Naive thymus-derived CD4-positive, alpha-beta T cell (primary cell): ENCODE measurements at regions of chr1 and their contacts with region 1.

Region 1: GRCh38 chr1:182839209-182840065 is at the start of gene DHX9:
- DNase-seq: peak; percentile 93 to 100 (median 97)
- ATAC-seq: peak; percentile 89
- H3K4me3 ChIP-seq: peak within 1 kb of the TSS; percentile 99
- H3K4me3 Mint-ChIP-seq: peak within 1 kb of the TSS; percentile 91 to 100 (median 98)
- H3K27ac ChIP-seq: peak within 1 kb of the TSS; percentile 84
- H3K27ac Mint-ChIP-seq: peak within 1 kb of the TSS; percentile 92 to 100 (median 98)
- H3K4me1 ChIP-seq: peaks cover 22 to 33% of the 10 kb centered on the region in 2 donors
- H3K4me1 Mint-ChIP-seq: peaks cover 36 to 61% (median 54%) of the 10 kb centered on the region in 7 donors
- H3K27me3 ChIP-seq: no peaks in the 10 kb centered on the region
- H3K27me3 Mint-ChIP-seq: peaks cover 0 to 9% (median 0%) of the 10 kb centered on the region in 5 donors
- total RNA-seq, gene DHX9: 207 to 299 (median 227) TPM

Region 2: DNA sequence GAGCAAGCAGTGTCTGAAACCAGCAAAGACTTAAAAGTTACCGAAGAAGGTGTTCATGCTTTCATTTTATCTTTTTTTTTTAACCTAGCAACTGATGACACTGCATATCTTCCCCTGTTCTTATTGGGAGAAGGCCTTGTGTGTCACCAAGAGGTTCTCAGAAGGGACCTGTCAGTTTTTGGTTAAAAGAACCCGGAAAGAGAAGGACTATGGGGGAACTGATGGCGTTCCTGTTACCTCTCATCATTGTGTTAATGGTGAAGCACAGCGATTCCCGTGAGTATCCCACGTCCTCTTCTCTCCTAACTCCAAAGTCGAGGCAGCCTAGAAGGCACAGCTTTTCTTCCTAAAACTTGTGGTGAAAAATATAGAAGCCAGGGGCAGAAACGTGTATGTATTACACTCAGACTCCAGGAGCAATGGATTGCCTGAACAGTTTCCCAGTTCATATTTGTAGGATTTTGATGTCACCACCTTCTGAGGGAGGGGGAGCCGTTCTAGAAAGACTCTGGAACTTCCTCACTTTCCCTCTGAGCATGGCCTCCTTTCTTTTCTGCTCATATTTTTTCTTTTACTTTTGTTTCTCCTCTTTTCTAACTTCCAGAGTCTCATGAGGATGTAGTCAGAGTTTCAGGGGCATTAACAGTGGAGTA is 1805.5 kb before region 1 on chr1 and contains the start of gene MR1:
- CTCF ChIA-PET with region 1: no interaction called
- POLR2A ChIA-PET with region 1: no interaction called
- intact Hi-C with region 1: loop called in 1 of 2 experiments (anchors 5 kb)
- DNase-seq: peak in 8 of 9 donors; percentile 32 to 92 (median 88)
- ATAC-seq: peak; percentile 97
- H3K4me3 ChIP-seq: peak within 1 kb of the TSS; percentile 77
- H3K4me3 Mint-ChIP-seq: peak within 1 kb of the TSS; percentile 84 to 99 (median 97)
- H3K27ac ChIP-seq: peak within 1 kb of the TSS; percentile 95
- H3K27ac Mint-ChIP-seq: peak within 1 kb of the TSS; percentile 95 to 100 (median 98)
- H3K4me1 ChIP-seq: peaks cover 32 to 42% of the 10 kb centered on the region in 2 donors
- H3K4me1 Mint-ChIP-seq: peaks cover 39 to 69% (median 61%) of the 10 kb centered on the region in 7 donors
- H3K27me3 ChIP-seq: no peaks in the 10 kb centered on the region
- H3K27me3 Mint-ChIP-seq: peaks cover 0 to 6% (median 0%) of the 10 kb centered on the region in 5 donors
- total RNA-seq, gene MR1: 19.8 to 35.8 (median 29.7) TPM

Region 3: DNA sequence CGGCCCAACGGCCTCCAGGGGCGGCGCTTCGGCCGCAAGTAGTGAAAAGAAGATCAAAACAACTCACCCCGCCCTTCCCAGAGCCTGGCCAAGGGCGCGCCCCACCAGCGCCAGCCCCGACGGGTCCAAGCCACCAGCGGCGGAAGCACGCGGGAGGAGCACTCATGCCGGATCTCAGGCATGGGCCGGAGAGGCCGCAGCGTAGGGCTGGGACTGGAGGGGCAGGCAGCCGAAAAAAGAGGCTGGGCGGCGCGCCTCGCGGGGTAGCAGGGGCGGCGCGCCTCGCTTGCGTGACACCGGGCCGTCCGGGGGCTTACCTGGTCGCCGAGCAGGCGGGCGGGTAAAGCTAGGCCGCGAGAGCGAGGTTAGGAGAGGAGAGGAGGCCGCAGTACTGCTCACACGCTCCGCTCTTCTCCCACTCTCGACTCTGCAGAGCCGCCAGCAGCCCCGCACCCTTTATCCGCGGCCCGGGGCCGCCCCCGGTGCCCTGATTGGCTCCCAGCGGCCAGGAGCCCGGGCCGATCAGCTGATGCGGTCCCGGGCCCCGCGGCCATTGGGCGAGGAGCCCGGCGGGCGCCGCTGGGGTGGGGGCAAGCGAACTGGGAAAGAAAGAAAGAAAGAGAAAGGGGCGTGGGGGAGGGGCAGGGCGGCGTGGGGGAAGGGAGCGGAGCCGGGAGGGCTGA is 447.9 kb before region 1 on chr1 and contains the start of gene GLUL:
- CTCF ChIA-PET with region 1: no interaction called
- POLR2A ChIA-PET with region 1: no interaction called
- intact Hi-C with region 1: loop called in 1 of 2 experiments (anchors 1 kb)
- DNase-seq: peak; percentile 46 to 83 (median 63)
- ATAC-seq: peak; percentile 87
- H3K4me3 ChIP-seq: peak within 1 kb of the TSS; percentile 73
- H3K4me3 Mint-ChIP-seq: peak within 1 kb of the TSS; percentile 87 to 98 (median 94)
- H3K27ac ChIP-seq: peak within 1 kb of the TSS; percentile 64
- H3K27ac Mint-ChIP-seq: peak within 1 kb of the TSS; percentile 82 to 97 (median 89)
- H3K4me1 ChIP-seq: peaks cover 10 to 14% of the 10 kb centered on the region in 2 donors
- H3K4me1 Mint-ChIP-seq: peaks cover 17 to 45% (median 29%) of the 10 kb centered on the region in 7 donors
- H3K27me3 ChIP-seq: no peaks in the 10 kb centered on the region
- H3K27me3 Mint-ChIP-seq: peaks cover 0 to 25% (median 0%) of the 10 kb centered on the region in 5 donors
- total RNA-seq, gene GLUL: 66.2 to 357 (median 112) TPM

Region 4: DNA sequence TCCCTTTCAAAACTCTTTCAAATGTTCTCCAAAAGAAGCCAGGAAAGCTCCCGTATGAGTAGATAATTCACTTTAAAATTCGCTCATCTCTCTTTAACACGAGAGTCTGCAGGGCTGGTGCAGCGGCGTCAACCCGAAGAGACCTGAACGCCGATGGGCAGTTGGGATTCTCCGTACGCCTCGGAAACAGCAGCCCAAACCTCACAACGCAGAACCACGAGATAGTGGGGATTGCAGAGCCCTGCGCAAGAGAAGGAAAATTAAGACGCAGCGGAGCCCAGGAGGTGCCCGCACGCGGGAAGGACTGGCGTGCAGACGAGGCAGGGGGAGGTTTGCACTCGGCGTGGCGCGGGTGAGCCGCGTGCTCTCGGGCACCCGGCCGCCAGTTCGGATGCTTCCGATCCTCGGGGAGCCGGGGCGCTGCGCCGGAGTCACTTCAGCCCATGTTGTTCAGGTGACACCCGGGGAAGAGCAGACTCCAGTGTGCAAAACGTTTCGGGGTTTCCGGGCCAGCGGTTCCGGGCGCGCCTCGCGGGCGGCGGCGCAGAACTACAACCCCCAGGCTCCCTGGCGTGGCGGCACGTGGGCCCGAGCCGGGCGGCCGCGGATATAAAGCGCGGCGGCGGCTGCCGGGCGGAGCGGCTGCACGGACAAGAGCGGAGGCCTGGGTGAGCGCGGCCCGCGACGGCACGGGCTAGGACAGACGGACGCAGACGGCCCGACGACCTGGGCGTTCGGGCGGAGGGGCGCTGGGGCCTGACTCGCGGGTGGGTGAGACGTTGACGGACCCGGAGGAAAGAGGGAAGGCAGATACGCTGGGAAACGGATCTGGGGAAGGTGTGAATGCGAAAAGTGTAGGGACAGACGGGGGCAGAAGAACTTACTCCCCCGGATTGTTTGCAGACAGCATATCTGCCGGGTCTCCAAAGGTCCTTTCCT is 50.0 kb before region 1 on chr1 and contains the start of gene NPL:
- CTCF ChIA-PET with region 1: interaction called, 3 read pairs
- POLR2A ChIA-PET with region 1: interaction called, 9 read pairs
- intact Hi-C with region 1: loop called (anchors 1 kb)
- DNase-seq: peak; percentile 78 to 88 (median 86)
- ATAC-seq: peak; percentile 97
- H3K4me3 ChIP-seq: peak within 1 kb of the TSS; percentile 94
- H3K4me3 Mint-ChIP-seq: peak within 1 kb of the TSS; percentile 88 to 96 (median 94)
- H3K27ac ChIP-seq: peak within 1 kb of the TSS; percentile 68
- H3K27ac Mint-ChIP-seq: peak within 1 kb of the TSS; percentile 45 to 94 (median 87)
- H3K4me1 ChIP-seq: peaks cover 8 to 13% of the 10 kb centered on the region in 2 donors
- H3K4me1 Mint-ChIP-seq: peaks cover 8 to 18% (median 15%) of the 10 kb centered on the region in 7 donors
- H3K27me3 ChIP-seq: no peaks in the 10 kb centered on the region
- H3K27me3 Mint-ChIP-seq: peaks cover 0 to 38% (median 0%) of the 10 kb centered on the region in 5 donors
- total RNA-seq, gene NPL: 3.0 to 20.8 (median 9.9) TPM

Region 5: GRCh38 chr1:182877842-182878241 is 38.4 kb after region 1 on chr1:
- CTCF ChIA-PET with region 1: no interaction called
- POLR2A ChIA-PET with region 1: no interaction called
- intact Hi-C with region 1: loop called in 1 of 2 experiments (anchors 5 kb)
- DNase-seq: peak in 1 of 9 donors; percentile 30
- ATAC-seq: no peak
- H3K4me3 ChIP-seq: no peak overlapping the region
- H3K4me3 Mint-ChIP-seq: no peak overlapping the region
- H3K27ac ChIP-seq: no peak overlapping the region
- H3K27ac Mint-ChIP-seq: peak overlapping the region in 3 of 9 donors; percentile 21 to 54 (median 50)
- H3K4me1 ChIP-seq: no peaks in the 10 kb centered on the region
- H3K4me1 Mint-ChIP-seq: peaks cover 3 to 21% (median 6%) of the 10 kb centered on the region in 7 donors
- H3K27me3 ChIP-seq: no peaks in the 10 kb centered on the region
- H3K27me3 Mint-ChIP-seq: no peaks in the 10 kb centered on the region